ENCODE measurements at regions of chr15 and their contacts with region 1.

Region 1: DNA sequence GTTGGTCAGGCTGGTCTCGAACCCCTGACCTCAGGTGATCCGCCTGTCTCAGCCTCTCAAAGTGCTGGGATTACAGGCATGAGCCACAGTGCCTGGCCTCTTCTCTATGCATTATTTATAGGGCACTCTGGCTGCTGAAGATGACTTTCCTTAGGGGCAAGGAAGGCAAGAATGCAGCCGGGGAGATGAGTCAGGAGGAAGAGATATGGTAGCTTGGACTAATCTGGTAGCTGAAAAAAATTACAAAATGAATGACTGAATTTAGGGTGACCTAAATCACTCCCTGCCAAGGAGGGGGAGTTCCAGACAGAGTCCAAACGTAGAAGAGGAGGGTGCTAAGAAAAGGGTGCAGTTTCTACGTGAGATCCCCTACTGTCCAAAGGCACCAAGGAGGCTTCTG is 14.2 kb downstream of the RHCG start:
- DNase-seq: no peak

Region 2: GRCh38 chr15:89346516-89347231 is 135.5 kb before region 1 on chr15:
- CTCF ChIA-PET with region 1: no interaction called
- POLR2A ChIA-PET with region 1: no interaction called
- DNase-seq: no peak

Region 3: DNA sequence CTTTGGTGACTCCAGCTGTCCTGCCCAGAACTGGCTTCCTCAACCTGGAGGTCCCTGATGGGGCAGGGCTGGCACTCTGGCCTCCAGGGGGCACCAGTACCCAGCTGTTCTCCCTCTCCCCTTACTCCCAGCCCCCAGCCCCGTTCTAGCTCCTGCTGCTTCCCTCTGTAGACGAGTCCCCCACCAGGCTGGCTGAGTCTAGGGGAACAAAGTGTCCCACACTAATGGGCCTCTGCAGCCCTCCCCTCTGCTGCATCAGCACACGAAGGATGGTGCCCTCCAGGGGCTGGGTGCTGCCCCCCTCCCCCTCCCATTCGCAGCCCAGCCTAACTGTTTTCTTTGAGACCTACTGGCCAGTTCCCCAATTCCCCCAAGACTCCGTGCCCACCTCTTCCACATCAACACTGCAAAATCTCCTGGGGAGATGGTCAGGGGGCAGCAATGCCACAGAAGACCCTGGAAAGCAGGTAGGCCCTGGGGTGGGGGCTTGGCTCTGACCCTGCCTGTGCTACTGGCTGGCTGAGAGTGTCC is 10.0 kb after region 1 on chr15:
- CTCF ChIA-PET with region 1: interaction called, 13 read pairs
- POLR2A ChIA-PET with region 1: no interaction called
- DNase-seq: peak; percentile 58

Region 4: DNA sequence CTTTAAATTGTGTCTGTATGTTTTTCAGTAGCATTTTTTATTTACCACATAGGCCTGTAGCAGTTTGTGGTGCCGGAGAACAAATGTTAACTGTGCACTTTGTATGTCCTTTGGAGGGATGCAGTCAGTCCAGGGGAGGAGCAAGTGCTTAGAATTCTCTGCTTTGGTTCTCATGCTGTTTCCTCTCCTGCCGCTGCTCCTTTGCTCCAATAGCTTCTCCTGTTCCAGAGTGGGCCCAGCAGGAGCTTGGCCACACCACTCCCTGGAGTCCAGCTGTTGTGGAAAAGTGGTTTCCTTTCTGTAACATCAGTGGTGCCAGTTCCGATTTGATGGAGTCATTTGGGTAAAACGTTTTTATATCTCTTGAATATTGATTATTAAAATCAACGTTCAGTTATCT is 109.7 kb after region 1 on chr15:
- CTCF ChIA-PET with region 1: no interaction called
- POLR2A ChIA-PET with region 1: no interaction called
- DNase-seq: no peak

Measured in HEK293T (cell line).